ENCODE measurements at regions of chr9 and their contacts with region 1.

Region 1: GRCh38 chr9:127980706-127981558 is at the start of gene EEIG1:
- DNase-seq: peak; percentile 95 to 99 (median 98)
- ATAC-seq: peak; percentile 94
- H3K4me3 ChIP-seq: peak within 1 kb of the TSS; percentile 73
- H3K27ac ChIP-seq: peak within 1 kb of the TSS; percentile 86
- H3K4me1 ChIP-seq: peaks cover 44 to 64% of the 10 kb centered on the region in 2 experiments
- H3K27me3 ChIP-seq: no peaks in the 10 kb centered on the region
- CTCF ChIP-seq: 0 out of 6 replicates have a peak, but pooled peaks of 1 of the 3 experiments have one; percentile 29
- EP300 ChIP-seq: no peak
- POLR2A ChIP-seq: peak; percentile 80
- RAD21 ChIP-seq: peak in 1 of 2 experiments; percentile 12; a peak in 2 of 4 replicates
- polyA plus RNA-seq, gene EEIG1: 0.17 to 0.25 TPM

Region 2: DNA sequence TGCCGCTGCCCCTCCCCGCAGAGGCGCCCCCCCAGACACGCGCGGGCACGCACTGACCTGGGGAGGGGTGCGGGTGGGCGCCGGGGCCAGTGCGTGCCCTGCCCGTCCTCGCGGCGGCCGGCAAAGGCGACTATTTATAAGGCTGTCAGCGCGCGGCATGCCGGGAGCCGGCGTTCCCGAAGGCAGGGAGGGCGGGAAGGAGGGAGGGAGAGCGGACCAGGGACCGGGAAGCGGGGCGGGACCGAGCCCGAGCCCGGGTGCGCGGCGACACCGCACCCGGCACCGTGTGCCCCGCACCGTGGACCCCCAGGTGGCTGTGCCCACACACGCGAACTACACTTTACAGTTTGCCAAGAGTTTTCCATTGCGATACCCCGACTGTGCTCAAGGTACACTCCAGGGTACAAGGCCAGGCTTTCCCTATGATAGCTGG is 103.3 kb before region 1 on chr9 and contains the start of gene AK1:
- CTCF ChIA-PET with region 1: no interaction called
- POLR2A ChIA-PET with region 1: no interaction called
- in situ Hi-C with region 1: no loop called
- intact Hi-C with region 1: no loop called
- DNase-seq: peak; percentile 68 to 82 (median 80)
- ATAC-seq: peak; percentile 85
- H3K4me3 ChIP-seq: peak within 1 kb of the TSS; percentile 46
- H3K27ac ChIP-seq: peak within 1 kb of the TSS; percentile 65
- H3K4me1 ChIP-seq: peaks cover 19 to 54% of the 10 kb centered on the region in 2 experiments; a peak in 4 of 5 replicates
- H3K27me3 ChIP-seq: no peaks in the 10 kb centered on the region
- CTCF ChIP-seq: no peak
- EP300 ChIP-seq: no peak
- POLR2A ChIP-seq: peak; percentile 55; the same call in 1 of the 2 replicates
- RAD21 ChIP-seq: no peak
- polyA plus RNA-seq, gene AK1: 10.1 to 38.9 TPM

Region 3: GRCh38 chr9:127970401-127971313 is 10.3 kb before region 1 on chr9:
- CTCF ChIA-PET with region 1: no interaction called
- POLR2A ChIA-PET with region 1: interaction called, 11 read pairs
- in situ Hi-C with region 1: no loop called
- intact Hi-C with region 1: no loop called
- DNase-seq: no peak
- ATAC-seq: no peak
- H3K4me3 ChIP-seq: no peak overlapping the region
- H3K27ac ChIP-seq: no peak overlapping the region
- H3K4me1 ChIP-seq: peaks cover 38 to 88% of the 10 kb centered on the region in 2 experiments
- H3K27me3 ChIP-seq: no peaks in the 10 kb centered on the region
- CTCF ChIP-seq: no peak
- EP300 ChIP-seq: no peak
- POLR2A ChIP-seq: no peak
- RAD21 ChIP-seq: no peak

Region 4: GRCh38 chr9:127991042-127991756 is 10.3 kb after region 1 on chr9:
- CTCF ChIA-PET with region 1: no interaction called
- POLR2A ChIA-PET with region 1: interaction called, 15 read pairs
- in situ Hi-C with region 1: no loop called
- intact Hi-C with region 1: no loop called
- DNase-seq: no peak
- ATAC-seq: peak; percentile 65
- H3K4me3 ChIP-seq: no peak overlapping the region
- H3K27ac ChIP-seq: no peak overlapping the region
- H3K4me1 ChIP-seq: peaks cover 9 to 10% of the 10 kb centered on the region in 2 experiments; a peak in 3 of 5 replicates
- H3K27me3 ChIP-seq: no peaks in the 10 kb centered on the region
- CTCF ChIP-seq: no peak
- EP300 ChIP-seq: no peak
- POLR2A ChIP-seq: no peak
- RAD21 ChIP-seq: no peak

Region 5: DNA sequence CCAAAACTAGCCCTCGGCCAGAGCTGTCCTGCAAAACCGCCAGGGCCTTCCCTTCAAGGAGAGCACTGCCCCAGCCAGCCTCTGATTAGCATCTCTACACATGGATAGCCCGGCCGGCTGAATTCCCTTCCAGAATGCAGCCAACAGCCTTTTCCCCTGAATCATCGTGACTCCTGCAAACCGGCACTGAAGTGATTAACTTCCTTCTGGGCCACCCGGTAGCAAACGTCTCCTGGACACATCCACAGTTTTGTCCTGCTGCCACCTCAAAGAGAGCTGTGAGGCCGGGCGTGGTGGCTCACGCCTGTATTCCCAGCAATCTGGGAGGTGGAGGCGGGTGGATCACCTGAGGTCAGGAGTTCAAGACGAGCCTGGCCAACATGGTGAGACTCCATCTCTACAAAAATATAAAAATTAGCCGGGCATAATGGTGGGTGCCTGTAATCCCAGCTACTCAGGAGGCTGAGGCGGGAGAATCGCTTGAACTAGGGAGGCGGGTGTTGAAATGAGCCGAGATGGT is 20.9 kb after region 1 on chr9:
- CTCF ChIA-PET with region 1: no interaction called
- POLR2A ChIA-PET with region 1: interaction called, 14 read pairs
- in situ Hi-C with region 1: no loop called
- intact Hi-C with region 1: no loop called
- DNase-seq: peak; percentile 63 to 92 (median 72)
- ATAC-seq: peak; percentile 95
- H3K4me3 ChIP-seq: peak overlapping the region; percentile 12; the same call in 1 of the 2 replicates
- H3K27ac ChIP-seq: peak overlapping the region; percentile 90
- H3K4me1 ChIP-seq: peaks cover 23 to 37% of the 10 kb centered on the region in 2 experiments
- H3K27me3 ChIP-seq: no peaks in the 10 kb centered on the region
- CTCF ChIP-seq: peak in 1 of 3 experiments; percentile 10; a peak in 1 of 6 replicates
- EP300 ChIP-seq: peak; percentile 90
- POLR2A ChIP-seq: peak; percentile 84
- RAD21 ChIP-seq: peak; percentile 26 to 28; a peak in 2 of 4 replicates